Posterior vena cava (tissue), 2 donors: ENCODE measurements at regions of chr15 and their contacts with region 1.

Region 1: DNA sequence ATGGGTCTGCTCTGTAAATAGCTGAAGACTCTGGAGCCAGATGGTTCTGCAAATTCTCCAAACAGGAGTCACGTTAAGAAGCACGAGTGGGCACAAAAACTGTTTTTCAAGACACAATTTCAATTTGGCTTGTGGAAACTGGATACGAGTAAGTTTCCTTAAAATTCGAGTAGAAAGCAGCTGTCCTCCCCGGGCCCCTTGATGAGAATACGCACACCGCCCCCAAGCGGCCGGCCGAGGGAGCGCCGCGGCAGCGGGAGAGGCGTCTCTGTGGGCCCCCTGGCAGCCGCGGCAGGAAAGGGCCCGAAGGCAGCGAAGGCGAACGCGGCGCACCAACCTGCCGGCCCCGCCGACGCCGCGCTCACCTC is 778 bp upstream of the THBS1 start:
- DNase-seq: peak; percentile 98

Region 2: DNA sequence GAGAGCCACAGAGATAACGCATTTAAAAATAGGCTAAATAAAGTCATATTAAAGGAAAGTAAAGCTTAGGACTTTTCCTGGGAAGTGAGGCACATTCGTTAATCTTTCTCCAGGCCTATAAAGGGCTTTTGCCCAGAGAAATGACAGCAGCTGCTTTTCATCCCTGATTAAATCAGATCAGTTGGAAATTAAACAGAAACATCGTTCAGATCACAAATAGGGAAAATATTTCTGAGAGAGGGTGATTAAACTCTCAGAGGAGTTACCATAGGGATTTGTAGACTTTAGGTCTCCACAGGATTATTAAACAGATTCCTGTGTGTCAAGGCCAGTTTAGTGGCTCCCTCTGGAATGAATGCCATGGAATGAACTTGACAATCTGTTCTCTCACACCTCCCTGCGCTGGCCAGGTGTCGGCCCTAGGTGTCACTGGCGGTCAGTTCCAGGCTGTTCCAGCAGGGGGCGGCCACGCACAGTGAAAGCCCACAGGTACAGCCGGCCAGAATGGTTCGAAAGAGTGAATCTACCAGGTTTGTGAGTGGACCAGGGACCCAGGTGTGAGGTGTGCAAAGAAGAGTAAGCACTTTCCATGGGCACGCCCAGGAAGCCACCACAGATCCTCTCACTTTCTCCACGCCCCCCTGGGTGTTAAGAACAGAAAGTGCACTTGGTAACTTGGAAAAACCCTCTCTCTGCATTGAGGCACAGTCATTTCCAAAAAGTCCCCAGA is 762.5 kb before region 1 on chr15:
- intact Hi-C with region 1: loop called (anchors 2 to 10 kb)
- DNase-seq: peak; percentile 90

Region 3: GRCh38 chr15:39171944-39172368 is 408.1 kb before region 1 on chr15:
- intact Hi-C with region 1: loop called (anchors 5 kb)
- DNase-seq: peak; percentile 79

Region 4: GRCh38 chr15:39358441-39359041 is 221.6 kb before region 1 on chr15:
- intact Hi-C with region 1: loop called in 1 of 2 experiments (anchors 10 kb)
- DNase-seq: no peak

Region 5: GRCh38 chr15:39472621-39473297 is 107.3 kb before region 1 on chr15:
- intact Hi-C with region 1: loop called in 1 of 2 experiments (anchors 10 kb)
- DNase-seq: peak; percentile 98

Region 6: GRCh38 chr15:39495871-39496840 is 83.9 kb before region 1 on chr15:
- intact Hi-C with region 1: loop called in 1 of 2 experiments (anchors 5 kb)
- DNase-seq: no peak

Region 7: DNA sequence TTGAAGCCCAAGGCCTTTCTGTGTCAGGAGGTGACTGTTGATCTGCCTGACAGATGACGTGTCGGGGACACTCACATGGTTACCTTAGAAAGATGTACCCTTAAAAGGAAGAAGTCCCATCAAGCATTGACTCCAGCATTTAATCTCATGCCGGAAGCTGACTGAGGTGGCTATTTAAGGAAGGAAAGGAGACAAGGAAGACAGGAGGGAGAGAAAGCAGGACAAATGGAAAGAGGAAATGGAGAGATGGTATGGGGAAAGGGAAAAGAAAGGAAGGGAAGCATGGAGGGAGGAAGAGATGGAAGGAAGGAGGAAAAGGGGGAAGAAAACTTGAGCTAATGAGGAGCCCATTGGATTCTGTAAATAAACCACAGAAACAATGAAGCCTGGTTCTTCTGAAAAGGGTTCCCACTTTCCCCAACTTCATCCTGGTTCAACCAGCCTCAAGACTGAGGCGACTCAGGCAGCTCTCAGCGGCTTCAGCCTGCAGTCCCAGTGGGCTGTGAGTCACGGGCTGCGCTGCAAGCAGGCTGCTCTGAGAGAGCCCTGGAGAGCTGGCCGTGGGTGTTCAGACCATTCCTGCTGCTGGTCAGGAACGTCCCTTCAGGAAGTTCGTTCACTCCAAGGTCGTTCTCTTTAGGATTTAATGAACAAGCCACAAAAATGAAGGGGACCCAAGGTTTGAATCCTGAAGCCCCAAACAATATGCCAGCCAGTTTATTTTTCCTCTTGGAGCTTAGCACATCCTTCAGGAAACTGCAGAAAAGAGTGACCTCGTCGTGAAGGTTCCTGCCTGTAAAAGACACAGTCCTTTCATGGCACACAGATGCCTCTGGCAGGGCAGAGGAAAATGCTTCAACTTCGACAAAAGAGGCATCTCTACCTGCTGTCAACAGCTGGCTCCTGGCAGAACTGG is 68.8 kb before region 1 on chr15:
- intact Hi-C with region 1: loop called in 1 of 2 experiments (anchors 10 kb)
- DNase-seq: peak; percentile 92